Esophagus muscularis mucosa (tissue), 4 donors: ENCODE measurements at regions of chr5 and their contacts with region 1.

Region 1: DNA sequence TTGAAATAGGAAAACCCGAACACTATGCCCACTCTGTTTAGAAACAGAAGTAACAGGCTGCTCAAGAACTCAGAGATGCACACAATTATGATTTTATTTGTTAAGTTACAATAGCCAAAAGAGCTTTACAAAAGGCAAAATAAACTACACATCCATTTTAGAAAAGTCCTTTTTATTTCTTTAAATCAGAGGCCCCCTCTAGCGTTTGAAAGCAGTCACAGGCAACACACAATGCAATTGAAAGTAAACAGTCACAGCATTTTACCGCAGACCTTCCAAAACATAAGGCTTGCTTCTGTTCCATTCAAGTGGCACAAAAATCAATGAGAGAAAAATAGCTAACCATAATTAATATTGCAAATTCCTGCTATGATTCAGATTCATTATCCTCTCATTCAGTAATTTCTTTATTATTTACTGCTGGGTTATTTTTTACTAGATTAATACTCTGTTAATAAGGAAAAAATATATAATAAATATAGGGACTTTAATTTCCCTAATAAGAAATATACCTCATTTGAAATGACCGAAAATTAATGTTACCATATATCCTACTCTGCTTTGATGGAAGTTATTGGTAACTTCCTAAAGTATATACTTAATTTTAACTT is 78.3 kb downstream of the CEP120 start:
- DNase-seq: no peak
- H3K4me3 ChIP-seq: no peak overlapping the region
- H3K27ac ChIP-seq: no peak overlapping the region
- H3K4me1 ChIP-seq: peaks cover 0 to 14% (median 11%) of the 10 kb centered on the region in 4 donors
- H3K27me3 ChIP-seq: no peaks in the 10 kb centered on the region
- CTCF ChIP-seq: peak; percentile 63 to 71 (median 67)
- EP300 ChIP-seq: no peak
- POLR2A ChIP-seq: no peak

Region 2: GRCh38 chr5:122704243-122705036 is 640.5 kb before region 1 on chr5:
- intact Hi-C with region 1: loop called (anchors 10 kb)
- DNase-seq: no peak
- H3K4me3 ChIP-seq: no peak overlapping the region
- H3K27ac ChIP-seq: no peak overlapping the region
- H3K4me1 ChIP-seq: no peaks in the 10 kb centered on the region
- H3K27me3 ChIP-seq: no peaks in the 10 kb centered on the region
- CTCF ChIP-seq: peak; percentile 39 to 58 (median 41)
- EP300 ChIP-seq: no peak
- POLR2A ChIP-seq: no peak

Region 3: DNA sequence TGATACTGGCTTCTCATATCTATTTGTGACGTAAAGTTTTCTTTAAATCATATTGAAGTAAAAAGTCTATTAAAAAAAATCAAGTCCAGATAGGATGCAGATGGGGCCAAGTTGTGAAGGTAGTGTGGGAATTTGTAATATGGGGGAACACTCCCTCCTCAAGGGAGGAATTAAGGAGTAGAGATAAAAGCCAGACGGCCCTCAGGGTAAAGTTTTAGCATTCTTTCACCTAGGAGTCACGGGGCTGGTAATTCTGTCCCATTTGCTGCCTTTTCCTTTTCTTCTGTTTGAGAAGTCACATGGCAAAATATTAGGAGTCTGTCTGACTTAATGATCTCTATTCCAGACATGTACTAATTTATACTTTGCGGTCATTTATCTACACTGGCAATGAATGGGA is 437.7 kb before region 1 on chr5:
- intact Hi-C with region 1: loop called (anchors 10 kb)
- DNase-seq: no peak
- H3K4me3 ChIP-seq: no peak overlapping the region
- H3K27ac ChIP-seq: no peak overlapping the region
- H3K4me1 ChIP-seq: peaks cover 0 to 10% (median 9%) of the 10 kb centered on the region in 4 donors
- H3K27me3 ChIP-seq: no peaks in the 10 kb centered on the region
- CTCF ChIP-seq: no peak
- EP300 ChIP-seq: no peak
- POLR2A ChIP-seq: no peak

Region 4: DNA sequence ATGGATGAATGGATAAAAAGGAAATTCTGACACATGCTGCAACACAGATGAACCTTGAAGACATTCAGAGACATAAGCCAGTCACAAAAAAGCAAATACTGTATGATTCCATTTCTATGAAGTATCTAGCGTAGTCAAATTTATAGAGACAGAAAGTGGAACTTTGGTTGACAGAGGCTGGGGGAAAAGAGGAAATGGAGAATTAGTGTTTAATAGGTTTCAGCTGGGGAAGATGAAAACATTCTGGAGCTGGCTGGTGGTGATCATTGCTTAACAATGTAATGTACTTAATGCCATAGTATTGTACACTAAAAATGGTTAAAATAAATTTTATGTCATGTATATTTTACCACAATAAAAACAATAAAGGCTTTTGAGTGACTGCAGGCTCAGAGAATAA is 332.6 kb before region 1 on chr5:
- intact Hi-C with region 1: no loop called
- DNase-seq: no peak
- H3K4me3 ChIP-seq: no peak overlapping the region
- H3K27ac ChIP-seq: no peak overlapping the region
- H3K4me1 ChIP-seq: no peaks in the 10 kb centered on the region
- H3K27me3 ChIP-seq: no peaks in the 10 kb centered on the region
- CTCF ChIP-seq: no peak
- EP300 ChIP-seq: no peak
- POLR2A ChIP-seq: no peak

Region 5: GRCh38 chr5:123496892-123497291 is 152.0 kb after region 1 on chr5:
- intact Hi-C with region 1: no loop called
- DNase-seq: no peak
- H3K4me3 ChIP-seq: no peak overlapping the region
- H3K27ac ChIP-seq: no peak overlapping the region
- H3K4me1 ChIP-seq: no peaks in the 10 kb centered on the region
- H3K27me3 ChIP-seq: no peaks in the 10 kb centered on the region
- CTCF ChIP-seq: no peak
- EP300 ChIP-seq: no peak
- POLR2A ChIP-seq: no peak